ENCODE measurements at regions of chr1 and their contacts with region 1.

Region 1: GRCh38 chr1:61049850-61050540 is 32.4 kb upstream of the NFIA start:
- DNase-seq: peak; percentile 94 to 97
- H3K4me3 ChIP-seq: peak overlapping the region; percentile 85 to 91 (median 87)
- H3K27ac ChIP-seq: peak overlapping the region; percentile 96 to 99 (median 98)
- H3K4me1 ChIP-seq: peaks cover 30 to 40% of the 10 kb centered on the region in 2 donors
- H3K27me3 ChIP-seq: no peaks in the 10 kb centered on the region
- CTCF ChIP-seq: peak; percentile 92 to 98 (median 97)
- POLR2A ChIP-seq: peak in 1 of 2 donors; percentile 67

Region 2: DNA sequence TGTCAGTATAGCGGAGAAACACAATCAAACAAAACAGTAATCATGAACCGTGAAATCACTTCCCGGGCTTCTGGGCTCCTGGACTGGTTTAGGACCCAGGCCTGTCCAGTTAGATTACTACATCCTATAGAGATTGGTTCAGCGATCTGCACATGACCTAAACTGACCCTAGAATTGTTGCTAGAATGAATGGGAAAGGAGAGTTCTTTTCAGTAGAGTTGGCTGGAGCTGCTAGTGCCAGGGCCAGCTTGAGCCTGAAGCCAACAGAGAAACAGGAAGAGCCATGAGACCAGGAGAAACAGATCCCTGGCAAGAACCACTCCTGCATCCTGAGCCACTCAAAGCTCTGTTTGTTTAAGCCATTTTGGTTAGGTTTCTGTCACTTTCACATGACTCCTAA is 502.2 kb before region 1 on chr1:
- intact Hi-C with region 1: no loop called
- DNase-seq: peak; percentile 83
- H3K4me3 ChIP-seq: no peak overlapping the region
- H3K27ac ChIP-seq: peak overlapping the region; percentile 56 to 79 (median 78)
- H3K4me1 ChIP-seq: peaks cover 19 to 24% of the 10 kb centered on the region in 2 donors
- H3K27me3 ChIP-seq: no peaks in the 10 kb centered on the region
- CTCF ChIP-seq: no peak
- POLR2A ChIP-seq: no peak

Region 3: GRCh38 chr1:61082336-61083012 is 32.5 kb after region 1 on chr1 and contains the start of gene NFIA:
- intact Hi-C with region 1: loop called (anchors 2 kb)
- DNase-seq: peak; percentile 53 to 56
- H3K4me3 ChIP-seq: peak within 1 kb of the TSS; percentile 85 to 91 (median 85)
- H3K27ac ChIP-seq: peak within 1 kb of the TSS; percentile 97 to 99 (median 97)
- H3K4me1 ChIP-seq: peaks cover 30 to 52% of the 10 kb centered on the region in 2 donors
- H3K27me3 ChIP-seq: no peaks in the 10 kb centered on the region
- CTCF ChIP-seq: no peak
- POLR2A ChIP-seq: peak in 1 of 2 donors; percentile 57
- total RNA-seq, gene NFIA: 105 to 149 (median 118) TPM

Region 4: DNA sequence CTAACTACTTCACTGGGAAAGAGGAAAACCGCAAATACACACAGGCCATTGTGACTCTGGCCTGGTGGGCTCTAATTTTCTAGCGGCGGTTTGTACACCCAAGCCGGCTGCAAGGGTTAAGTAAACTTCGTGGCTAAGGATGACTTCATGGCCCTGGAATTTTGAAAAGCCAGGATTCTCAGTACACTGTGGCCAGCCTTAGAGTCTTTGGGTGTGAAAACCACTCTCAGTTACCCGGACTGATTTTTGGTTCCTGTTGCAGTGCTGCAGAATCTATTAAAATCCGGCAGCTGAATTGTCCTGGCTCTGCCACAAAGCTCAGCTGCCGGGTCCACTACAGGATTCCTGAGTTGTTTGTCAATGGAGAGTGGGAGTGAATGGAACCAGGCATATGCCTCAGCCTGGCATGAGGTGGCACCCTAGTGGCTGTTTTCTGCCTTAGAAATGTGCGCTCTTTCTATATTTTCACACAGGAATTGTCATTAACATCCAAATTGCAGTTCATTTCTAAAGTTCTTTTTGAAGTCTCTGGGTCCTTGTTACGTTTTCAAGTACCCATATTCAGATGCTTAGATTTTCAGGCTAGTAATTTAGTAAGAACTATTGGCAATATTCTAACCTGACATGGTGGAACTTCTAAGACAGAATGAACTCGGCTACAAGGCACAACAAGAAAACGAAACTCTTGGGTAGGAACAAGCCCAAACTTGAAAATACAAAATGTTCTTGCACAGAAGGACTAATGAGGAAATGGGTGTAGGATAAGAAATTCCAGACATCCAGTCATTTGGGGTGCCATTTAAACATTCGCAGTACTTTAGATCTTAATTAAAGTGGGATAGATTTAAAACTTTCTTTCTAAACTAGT is 288.2 kb after region 1 on chr1:
- intact Hi-C with region 1: loop called (anchors 5 kb)
- DNase-seq: peak; percentile 87 to 89
- H3K4me3 ChIP-seq: no peak overlapping the region
- H3K27ac ChIP-seq: peak overlapping the region; percentile 58 to 70 (median 67)
- H3K4me1 ChIP-seq: peaks cover 22 to 39% of the 10 kb centered on the region in 2 donors
- H3K27me3 ChIP-seq: no peaks in the 10 kb centered on the region
- CTCF ChIP-seq: peak; percentile 45 to 93 (median 82)
- POLR2A ChIP-seq: peak in 1 of 2 donors; percentile 38

Region 5: GRCh38 chr1:61453111-61453961 is 403.3 kb after region 1 on chr1:
- intact Hi-C with region 1: loop called (anchors 5 kb)
- DNase-seq: peak; percentile 93
- H3K4me3 ChIP-seq: no peak overlapping the region
- H3K27ac ChIP-seq: peak overlapping the region; percentile 46 to 82 (median 74)
- H3K4me1 ChIP-seq: peaks cover 50 to 52% of the 10 kb centered on the region in 2 donors
- H3K27me3 ChIP-seq: no peaks in the 10 kb centered on the region
- CTCF ChIP-seq: peak; percentile 30 to 87 (median 74)
- POLR2A ChIP-seq: no peak

Measured in thyroid gland (tissue), 4 donors.